ENCODE measurements at regions of chr9 and their contacts with region 1.

Region 1: GRCh38 chr9:36166101-36166927 is 2.9 kb upstream of the CCIN start:
- DNase-seq: peak; percentile 75 to 83 (median 80)
- ATAC-seq: peak; percentile 90
- H3K4me3 ChIP-seq: no peak overlapping the region
- H3K27ac ChIP-seq: no peak overlapping the region
- H3K4me1 ChIP-seq: peaks cover 12% of the 10 kb centered on the region
- H3K27me3 ChIP-seq: no peaks in the 10 kb centered on the region
- CTCF ChIP-seq: peak; percentile 83 to 97 (median 91)
- POLR2A ChIP-seq: no peak

Region 2: GRCh38 chr9:36102742-36103495 is 63.4 kb before region 1 on chr9:
- intact Hi-C with region 1: loop called (anchors 5 kb)
- DNase-seq: peak; percentile 79 to 87 (median 82)
- ATAC-seq: peak; percentile 81
- H3K4me3 ChIP-seq: no peak overlapping the region
- H3K27ac ChIP-seq: no peak overlapping the region
- H3K4me1 ChIP-seq: no peaks in the 10 kb centered on the region
- H3K27me3 ChIP-seq: no peaks in the 10 kb centered on the region
- CTCF ChIP-seq: peak; percentile 47 to 82 (median 76)
- POLR2A ChIP-seq: no peak

Region 3: GRCh38 chr9:36765468-36766341 is 599.4 kb after region 1 on chr9:
- intact Hi-C with region 1: no loop called
- DNase-seq: peak; percentile 88 to 94 (median 89)
- ATAC-seq: peak; percentile 99
- H3K4me3 ChIP-seq: peak overlapping the region in 1 of 2 donors; percentile 26
- H3K27ac ChIP-seq: peak overlapping the region in 2 of 4 donors; percentile 14 to 74
- H3K4me1 ChIP-seq: peaks cover 11% of the 10 kb centered on the region
- H3K27me3 ChIP-seq: no peaks in the 10 kb centered on the region
- CTCF ChIP-seq: no peak
- POLR2A ChIP-seq: peak; percentile 15 to 76 (median 69)